Posterior cingulate gyrus (tissue), 11 donors: ENCODE measurements at regions of chr16 and their contacts with region 1.

Region 1: DNA sequence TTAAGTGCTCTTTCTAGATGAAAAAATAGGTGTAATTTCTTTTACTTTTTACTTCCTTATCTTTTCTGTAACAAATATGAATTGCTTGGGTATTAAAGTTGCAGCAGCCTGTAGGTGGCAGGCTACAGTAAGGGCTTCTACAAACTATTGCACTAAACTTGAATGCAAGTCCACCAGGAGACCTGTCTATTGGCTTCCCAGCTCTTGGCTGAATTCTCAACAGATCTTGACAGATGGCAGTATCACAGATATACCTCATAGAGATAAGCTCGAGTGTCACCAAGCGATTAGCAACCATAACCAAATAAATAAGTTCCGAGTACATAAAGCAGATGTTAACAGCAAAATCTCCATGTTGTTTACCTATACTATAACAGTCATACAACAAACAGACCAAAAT is 5.9 kb downstream of the BBS2 start:
- DNase-seq: peak in 4 of 10 donors; percentile 25 to 69 (median 54)

Region 2: GRCh38 chr16:56460101-56460500 is 53.9 kb before region 1 on chr16:
- intact Hi-C with region 1: no loop called
- DNase-seq: no peak

Region 3: DNA sequence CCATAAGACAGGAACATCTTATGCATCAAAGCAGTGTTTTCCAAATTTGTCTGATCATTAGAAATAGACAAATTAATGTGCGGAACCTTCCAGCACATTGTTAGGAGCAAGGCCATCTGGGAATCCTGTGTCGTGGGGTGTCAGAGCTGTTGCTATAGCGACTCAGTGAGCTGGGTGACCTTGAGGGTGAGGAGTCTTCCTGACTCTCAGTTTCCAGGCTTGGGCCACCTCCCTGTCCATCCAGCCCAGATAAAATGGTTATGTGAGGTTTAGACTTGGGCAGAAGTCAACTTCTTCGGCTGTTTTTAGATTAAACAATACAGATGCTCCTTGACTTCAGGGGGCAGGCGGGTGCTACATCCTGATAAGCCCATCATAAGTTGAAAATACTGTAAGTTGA is 188.9 kb after region 1 on chr16:
- intact Hi-C with region 1: loop called (anchors 1 kb)
- DNase-seq: no peak